ENCODE measurements at regions of chr13 and their contacts with region 1.

Region 1: DNA sequence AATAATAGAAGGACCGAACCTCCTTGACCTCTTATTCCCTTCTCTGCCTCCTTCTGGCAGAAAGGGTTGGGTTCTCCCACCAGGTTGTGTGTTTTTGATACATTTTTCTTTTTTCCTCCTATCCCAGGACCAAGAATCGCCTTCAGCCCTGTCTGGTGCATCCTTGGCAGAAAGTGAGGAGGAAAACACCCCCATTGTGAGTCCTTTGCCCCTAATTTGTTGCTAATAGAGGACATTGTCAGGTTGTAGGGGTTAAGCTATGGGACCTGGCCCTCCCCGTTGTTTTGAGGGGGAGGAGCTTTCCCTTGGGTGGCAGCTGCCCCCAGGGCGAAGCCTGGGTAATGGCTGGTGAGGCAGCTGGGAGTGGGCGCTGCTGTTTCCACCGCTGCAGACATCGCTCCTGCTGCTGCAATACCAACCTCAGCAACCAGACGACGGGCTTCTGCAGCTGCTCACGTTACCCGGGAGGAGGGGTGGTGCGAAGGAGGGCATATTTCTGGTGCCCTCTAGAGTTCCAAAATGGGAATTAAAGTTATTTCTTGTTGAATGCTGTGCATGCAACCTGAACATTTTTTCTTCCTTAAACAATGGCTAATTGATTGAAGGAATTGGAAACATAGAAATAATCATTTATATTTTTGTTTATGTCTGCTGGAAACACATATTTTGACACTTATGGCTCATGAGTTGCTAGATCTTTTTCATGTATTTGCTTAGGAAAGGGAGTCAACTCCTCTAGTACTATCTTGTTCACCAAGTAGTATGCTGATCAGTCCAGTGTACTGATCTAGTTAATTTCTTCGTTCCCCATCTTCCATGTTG is 1.5 kb downstream of the ZMYM2 start:
- DNase-seq: peak; percentile 61 to 91 (median 86)
- ATAC-seq: peak; percentile 63
- H3K4me3 ChIP-seq: peak overlapping the region; percentile 84
- H3K4me3 Mint-ChIP-seq: peak overlapping the region; percentile 90 to 99 (median 98)
- H3K27ac ChIP-seq: peak overlapping the region; percentile 97
- H3K27ac Mint-ChIP-seq: peak overlapping the region; percentile 91 to 99 (median 97)
- H3K4me1 ChIP-seq: peaks cover 19 to 30% of the 10 kb centered on the region in 2 donors
- H3K4me1 Mint-ChIP-seq: peaks cover 19 to 45% (median 31%) of the 10 kb centered on the region in 7 donors
- H3K27me3 ChIP-seq: no peaks in the 10 kb centered on the region
- H3K27me3 Mint-ChIP-seq: peaks cover 0 to 12% (median 0%) of the 10 kb centered on the region in 5 donors

Region 2: DNA sequence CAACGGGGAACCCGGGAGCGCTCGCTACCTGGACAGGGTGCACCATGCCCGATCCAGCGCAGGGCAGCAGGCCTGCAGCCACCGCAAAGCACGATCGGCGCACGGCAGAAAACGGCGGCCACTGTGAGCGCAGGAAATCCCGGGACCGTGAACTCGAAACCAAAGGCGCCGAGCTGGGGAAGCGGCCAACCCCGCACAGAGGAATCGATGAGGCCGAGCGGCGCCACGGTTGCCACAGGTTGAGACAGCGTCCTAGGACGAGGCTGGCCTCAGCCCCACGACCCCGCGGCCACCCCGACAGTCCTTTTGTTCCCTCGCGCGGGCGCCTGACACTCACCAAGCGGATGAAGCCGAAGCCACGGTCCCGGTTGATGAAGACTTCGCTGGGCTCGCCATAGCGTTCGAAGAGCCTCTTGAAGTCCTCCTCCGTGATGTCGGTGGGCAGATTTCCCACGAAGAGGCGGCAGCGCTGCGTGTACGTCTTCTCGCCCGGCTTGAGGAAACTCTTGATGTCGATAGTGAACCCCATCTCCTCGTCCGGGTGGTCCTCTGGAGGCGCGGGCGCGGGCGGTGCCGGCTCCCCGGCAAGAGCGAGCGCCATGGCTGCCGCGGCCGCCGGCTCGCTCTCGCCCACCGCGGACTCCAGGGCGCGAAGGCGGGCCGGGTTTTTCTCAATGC is 177.9 kb before region 1 on chr13:
- CTCF ChIA-PET with region 1: no interaction called
- POLR2A ChIA-PET with region 1: interaction called, 5 read pairs
- intact Hi-C with region 1: loop called (anchors 1 kb)
- DNase-seq: peak; percentile 26 to 61 (median 49)
- ATAC-seq: peak; percentile 63
- H3K4me3 ChIP-seq: peak overlapping the region; percentile 99
- H3K4me3 Mint-ChIP-seq: peak overlapping the region; percentile 96 to 100 (median 98)
- H3K27ac ChIP-seq: peak overlapping the region; percentile 98
- H3K27ac Mint-ChIP-seq: peak overlapping the region; percentile 96 to 100 (median 99)
- H3K4me1 ChIP-seq: peaks cover 0 to 8% of the 10 kb centered on the region in 2 donors
- H3K4me1 Mint-ChIP-seq: peaks cover 0 to 13% (median 10%) of the 10 kb centered on the region in 7 donors
- H3K27me3 ChIP-seq: no peaks in the 10 kb centered on the region
- H3K27me3 Mint-ChIP-seq: peaks cover 0 to 5% (median 0%) of the 10 kb centered on the region in 5 donors

Region 3: GRCh38 chr13:20118268-20119140 is 158.5 kb after region 1 on chr13:
- CTCF ChIA-PET with region 1: no interaction called
- POLR2A ChIA-PET with region 1: no interaction called
- intact Hi-C with region 1: loop called in 1 of 2 experiments (anchors 2 kb)
- DNase-seq: peak in 7 of 9 donors; percentile 8 to 45 (median 27)
- ATAC-seq: peak; percentile 54
- H3K4me3 ChIP-seq: peak overlapping the region; percentile 71
- H3K4me3 Mint-ChIP-seq: peak overlapping the region; percentile 83 to 96 (median 93)
- H3K27ac ChIP-seq: peak overlapping the region; percentile 67
- H3K27ac Mint-ChIP-seq: peak overlapping the region; percentile 53 to 97 (median 93)
- H3K4me1 ChIP-seq: peaks cover 0 to 9% of the 10 kb centered on the region in 2 donors
- H3K4me1 Mint-ChIP-seq: peaks cover 9 to 25% (median 20%) of the 10 kb centered on the region in 7 donors
- H3K27me3 ChIP-seq: no peaks in the 10 kb centered on the region
- H3K27me3 Mint-ChIP-seq: peaks cover 0 to 20% (median 0%) of the 10 kb centered on the region in 5 donors

Region 4: DNA sequence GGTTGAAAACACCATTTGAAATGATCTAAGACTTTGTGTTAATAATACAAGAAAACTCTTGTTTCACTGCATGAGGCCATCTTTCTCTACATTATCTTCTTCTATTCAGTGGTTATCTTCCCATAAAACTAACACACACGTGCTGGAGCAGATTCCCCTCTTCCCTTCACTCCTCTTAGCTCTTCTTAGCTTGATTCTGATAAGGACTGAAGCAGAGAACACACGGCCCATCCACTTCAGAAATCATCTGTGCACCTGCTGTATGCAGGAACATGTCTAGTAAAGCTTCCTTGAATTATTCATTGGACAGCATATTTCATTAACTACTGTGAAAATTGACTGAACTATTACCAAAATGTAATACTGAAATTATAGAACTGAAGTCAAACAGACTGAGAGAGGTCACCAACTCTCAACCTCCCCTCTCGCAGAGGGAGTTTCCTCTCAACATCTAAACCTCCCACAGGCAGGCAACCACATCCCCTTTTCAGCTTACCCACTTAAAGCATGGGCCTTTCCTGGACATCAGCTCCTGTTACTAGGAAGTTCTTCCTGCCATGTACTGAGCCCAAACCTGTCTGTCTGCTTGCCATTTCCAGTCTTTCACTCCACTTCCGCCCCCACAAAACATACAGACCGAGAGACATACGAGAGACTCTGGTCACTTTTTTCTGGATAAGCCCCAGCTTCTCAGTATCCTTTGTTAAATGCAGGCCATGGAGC is 451.8 kb after region 1 on chr13:
- CTCF ChIA-PET with region 1: no interaction called
- POLR2A ChIA-PET with region 1: no interaction called
- intact Hi-C with region 1: no loop called
- DNase-seq: peak in 7 of 9 donors; percentile 16 to 52 (median 45)
- ATAC-seq: peak; percentile 89
- H3K4me3 ChIP-seq: no peak overlapping the region
- H3K4me3 Mint-ChIP-seq: peak overlapping the region; percentile 37 to 80 (median 64)
- H3K27ac ChIP-seq: no peak overlapping the region
- H3K27ac Mint-ChIP-seq: peak overlapping the region; percentile 78 to 93 (median 84)
- H3K4me1 ChIP-seq: peaks cover 13 to 25% of the 10 kb centered on the region in 2 donors
- H3K4me1 Mint-ChIP-seq: peaks cover 11 to 34% (median 29%) of the 10 kb centered on the region in 7 donors
- H3K27me3 ChIP-seq: no peaks in the 10 kb centered on the region
- H3K27me3 Mint-ChIP-seq: no peaks in the 10 kb centered on the region

Region 5: DNA sequence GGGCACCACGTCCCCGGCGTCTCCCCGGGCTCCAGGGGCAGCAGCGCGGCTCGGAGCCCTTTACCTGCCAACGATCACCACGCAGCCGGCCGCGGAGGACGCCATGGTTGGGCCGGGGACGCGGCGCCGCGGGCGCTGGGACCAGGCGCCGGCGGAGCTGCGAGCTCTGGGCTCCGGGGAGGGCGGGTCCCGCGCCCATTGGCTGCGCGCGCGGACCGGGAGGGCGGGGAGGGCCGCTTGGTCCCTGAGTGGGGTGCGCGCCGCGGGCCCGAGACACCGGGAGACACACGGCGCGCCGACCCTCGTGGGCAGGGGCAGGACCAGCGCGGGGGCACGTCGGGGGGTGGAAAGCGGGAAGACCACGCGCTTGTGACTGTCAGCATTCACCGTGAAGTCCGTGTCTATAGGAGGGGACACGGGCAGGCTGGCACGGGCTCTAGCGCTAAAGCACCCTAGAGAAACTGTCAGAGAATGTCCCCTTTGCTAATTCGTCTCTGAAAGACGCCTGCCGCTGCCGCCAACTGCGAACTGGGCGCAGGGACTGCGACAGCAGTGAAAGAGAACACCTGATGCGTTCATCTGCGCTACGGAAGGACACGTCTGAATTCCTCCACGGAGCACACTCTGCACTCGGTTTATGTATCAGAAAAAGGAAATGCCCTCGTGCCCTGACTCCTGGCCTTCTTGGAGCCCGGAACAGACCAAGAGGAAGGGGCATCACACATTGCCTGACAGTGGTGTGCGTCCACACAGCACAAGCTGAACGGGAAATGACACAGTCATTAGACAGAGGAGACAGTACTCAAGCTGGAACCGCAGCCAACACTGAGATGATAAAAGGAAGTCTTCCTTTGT is 565.9 kb after region 1 on chr13 and contains the start of gene CRYL1:
- CTCF ChIA-PET with region 1: no interaction called
- POLR2A ChIA-PET with region 1: no interaction called
- intact Hi-C with region 1: loop called in 1 of 2 experiments (anchors 5 kb)
- DNase-seq: peak; percentile 56 to 78 (median 68)
- ATAC-seq: peak; percentile 92
- H3K4me3 ChIP-seq: peak within 1 kb of the TSS; percentile 68
- H3K4me3 Mint-ChIP-seq: peak within 1 kb of the TSS; percentile 76 to 94 (median 87)
- H3K27ac ChIP-seq: peak within 1 kb of the TSS; percentile 65
- H3K27ac Mint-ChIP-seq: peak within 1 kb of the TSS; percentile 66 to 96 (median 88)
- H3K4me1 ChIP-seq: peaks cover 0 to 7% of the 10 kb centered on the region in 2 donors
- H3K4me1 Mint-ChIP-seq: peaks cover 11 to 40% (median 25%) of the 10 kb centered on the region in 7 donors
- H3K27me3 ChIP-seq: no peaks in the 10 kb centered on the region
- H3K27me3 Mint-ChIP-seq: peaks cover 0 to 9% (median 0%) of the 10 kb centered on the region in 5 donors
- total RNA-seq, gene CRYL1: 12.3 to 21.2 (median 16.3) TPM

Region 6: DNA sequence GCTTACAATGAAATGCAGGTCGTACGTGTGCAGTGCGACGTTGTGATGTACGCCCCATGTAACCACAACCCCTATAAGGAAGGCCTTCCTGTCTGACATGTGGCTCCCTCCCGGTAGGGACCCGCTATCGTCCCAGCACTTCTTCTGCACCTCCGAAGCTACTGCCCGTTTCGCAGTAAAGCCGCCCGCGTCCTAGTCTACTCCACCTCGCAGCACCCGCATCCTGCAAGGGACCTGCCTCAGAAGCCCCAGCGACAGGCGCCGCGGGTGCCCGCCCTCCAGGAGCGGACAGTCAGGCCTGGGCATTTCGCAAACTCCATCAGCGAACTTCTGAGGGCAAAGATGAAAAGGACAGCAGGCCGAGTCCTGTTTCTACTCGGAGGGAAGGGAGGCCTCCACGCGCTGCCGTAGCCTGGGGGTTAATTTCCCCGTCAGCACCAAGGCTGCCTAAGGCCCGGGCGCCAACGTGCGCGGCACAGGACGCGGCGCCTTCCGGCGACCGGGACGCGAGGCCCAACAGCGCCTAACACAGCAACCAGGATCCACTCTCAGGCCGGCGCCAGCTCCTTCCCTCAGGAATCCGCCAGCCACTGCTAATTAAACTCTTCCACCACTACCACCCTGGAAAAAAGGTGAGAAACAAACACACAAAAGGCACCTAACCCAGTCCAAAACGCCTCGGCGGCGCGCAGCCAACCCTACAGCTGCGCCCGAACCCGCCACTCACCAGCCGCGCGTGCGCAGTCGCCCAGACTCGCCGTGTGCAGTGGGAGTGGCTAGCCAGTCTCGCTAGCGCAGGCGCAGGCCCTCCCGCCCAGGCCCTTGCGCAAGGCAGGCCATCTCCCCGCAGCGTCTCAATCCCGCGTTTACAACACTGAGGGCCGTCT is 813.4 kb after region 1 on chr13 and contains the start of gene EEF1AKMT1:
- CTCF ChIA-PET with region 1: no interaction called
- POLR2A ChIA-PET with region 1: no interaction called
- intact Hi-C with region 1: loop called (anchors 1 to 5 kb)
- DNase-seq: peak; percentile 88 to 98 (median 94)
- ATAC-seq: peak; percentile 93
- H3K4me3 ChIP-seq: peak within 1 kb of the TSS; percentile 90
- H3K4me3 Mint-ChIP-seq: peak within 1 kb of the TSS; percentile 85 to 99 (median 94)
- H3K27ac ChIP-seq: peak within 1 kb of the TSS; percentile 93
- H3K27ac Mint-ChIP-seq: peak within 1 kb of the TSS; percentile 94 to 100 (median 99)
- H3K4me1 ChIP-seq: peaks cover 9 to 16% of the 10 kb centered on the region in 2 donors
- H3K4me1 Mint-ChIP-seq: peaks cover 19 to 60% (median 53%) of the 10 kb centered on the region in 7 donors
- H3K27me3 ChIP-seq: no peaks in the 10 kb centered on the region
- H3K27me3 Mint-ChIP-seq: no peaks in the 10 kb centered on the region
- total RNA-seq, gene EEF1AKMT1: 4.2 to 11.2 (median 8.5) TPM

Region 7: DNA sequence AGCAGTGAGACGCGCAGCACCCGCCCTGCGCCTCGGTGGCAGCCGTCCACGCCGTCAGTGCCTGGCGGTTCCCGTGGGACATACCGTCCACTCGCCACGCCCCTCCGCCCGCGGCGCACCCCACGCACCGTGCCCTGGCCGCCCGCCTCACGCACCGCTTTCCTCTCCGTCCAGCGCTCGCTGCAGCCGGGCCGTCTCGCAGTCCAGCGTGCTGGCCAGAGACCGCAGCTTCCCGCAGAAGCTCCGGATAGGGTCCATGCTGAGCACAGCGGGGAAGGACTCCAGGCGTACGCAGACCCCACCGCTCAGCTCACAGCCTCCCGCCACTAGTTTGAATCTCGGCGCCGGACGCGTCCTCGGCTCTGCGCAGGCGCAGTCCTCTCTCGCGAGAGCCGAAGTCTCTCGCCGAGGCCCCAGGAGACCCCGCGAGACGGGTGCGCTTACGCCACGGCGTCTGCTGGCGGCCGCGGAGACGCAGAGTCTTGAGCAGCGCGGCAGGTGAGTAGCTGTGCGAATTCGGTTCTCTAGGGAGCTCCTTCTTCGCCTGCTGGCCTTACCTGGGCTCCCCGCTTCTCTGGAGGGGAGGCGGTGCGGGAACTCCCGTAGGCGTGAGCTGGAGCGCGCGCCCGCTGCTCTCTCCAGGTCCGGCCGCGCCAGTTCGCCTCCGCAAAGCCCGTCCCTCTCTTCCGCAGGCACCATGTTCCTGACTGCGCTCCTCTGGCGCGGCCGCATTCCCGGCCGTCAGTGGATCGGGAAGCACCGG is 1216.4 kb after region 1 on chr13 and contains the starts of genes MRPL57 and SKA3:
- CTCF ChIA-PET with region 1: no interaction called
- POLR2A ChIA-PET with region 1: no interaction called
- intact Hi-C with region 1: loop called in 1 of 2 experiments (anchors 2 kb)
- DNase-seq: peak; percentile 90 to 97 (median 94)
- ATAC-seq: peak; percentile 97
- H3K4me3 ChIP-seq: peak within 1 kb of the TSS; percentile 86
- H3K4me3 Mint-ChIP-seq: peak within 1 kb of the TSS; percentile 95 to 99 (median 97)
- H3K27ac ChIP-seq: peak within 1 kb of the TSS; percentile 95
- H3K27ac Mint-ChIP-seq: peak within 1 kb of the TSS; percentile 80 to 97 (median 95)
- H3K4me1 ChIP-seq: peaks cover 10 to 16% of the 10 kb centered on the region in 2 donors
- H3K4me1 Mint-ChIP-seq: peaks cover 13 to 31% (median 22%) of the 10 kb centered on the region in 7 donors
- H3K27me3 ChIP-seq: no peaks in the 10 kb centered on the region
- H3K27me3 Mint-ChIP-seq: no peaks in the 10 kb centered on the region
- total RNA-seq, gene MRPL57: 10.6 to 22.8 (median 19.8) TPM
- total RNA-seq, gene SKA3: 0.46 to 35.0 (median 1.6) TPM in 4 of 5 experiments, not detected in the other